HCT116 (cell line): ENCODE measurements at regions of chr17 and their contacts with region 1.

Region 1: DNA sequence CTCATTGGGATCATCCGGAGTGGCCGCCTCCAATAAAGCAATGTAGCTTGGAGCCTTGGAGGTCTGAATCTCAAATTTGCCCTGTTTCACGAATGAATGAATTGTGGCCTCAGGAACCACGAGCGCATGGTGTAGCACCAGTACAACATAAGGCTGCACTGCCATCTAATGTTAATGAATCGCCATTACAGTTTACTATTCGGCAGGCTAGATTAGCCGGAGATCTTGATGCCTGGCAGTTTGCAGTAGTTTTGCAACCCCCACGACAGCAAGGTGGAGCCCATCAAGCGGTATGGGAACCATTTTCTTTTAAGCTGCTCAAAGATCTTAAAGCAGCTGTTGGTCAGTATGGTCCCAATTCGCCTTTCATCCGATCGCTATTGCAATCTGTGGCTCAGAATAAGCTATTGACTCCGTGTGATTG is 18.8 kb downstream of the ALOX15B start:
- DNase-seq: peak; percentile 83
- ATAC-seq: peak; percentile 94
- H3K4me3 ChIP-seq: no peak overlapping the region
- H3K27ac ChIP-seq: no peak overlapping the region
- H3K4me1 ChIP-seq: peaks cover 0 to 20% of the 10 kb centered on the region in 2 experiments; a peak in 3 of 4 replicates
- H3K27me3 ChIP-seq: no peaks in the 10 kb centered on the region
- CTCF ChIP-seq: peak; percentile 65 to 89 (median 77)
- POLR2A ChIP-seq: no peak
- RAD21 ChIP-seq: peak; percentile 93

Region 2: DNA sequence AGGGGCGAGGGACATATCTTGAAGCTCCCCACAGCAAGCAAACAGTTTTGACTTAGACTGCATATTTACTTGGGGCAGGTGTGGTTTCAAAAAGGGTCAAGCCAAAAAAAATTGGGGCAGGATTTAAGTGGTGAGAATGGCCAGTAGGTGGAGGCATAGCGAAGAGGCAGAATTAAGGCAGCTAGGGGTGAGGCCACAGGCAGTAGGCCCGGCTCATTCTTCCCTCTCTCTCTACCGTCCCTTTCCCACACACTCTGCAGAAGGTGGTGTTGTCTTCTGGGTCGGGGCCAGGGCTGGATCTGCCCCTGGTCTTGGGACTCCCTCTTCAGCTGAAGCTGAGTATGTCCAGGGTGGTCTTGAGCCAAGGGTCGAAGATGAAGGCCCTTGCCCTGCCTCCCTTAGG is 425.2 kb before region 1 on chr17:
- CTCF ChIA-PET with region 1: no interaction called
- POLR2A ChIA-PET with region 1: no interaction called
- RAD21 ChIA-PET with region 1: no interaction called
- intact Hi-C with region 1: loop called (anchors 5 kb)
- DNase-seq: peak; percentile 54
- ATAC-seq: peak; percentile 74
- H3K4me3 ChIP-seq: no peak overlapping the region
- H3K27ac ChIP-seq: no peak overlapping the region
- H3K4me1 ChIP-seq: peaks cover 4 to 10% of the 10 kb centered on the region in 2 experiments; a peak in 3 of 4 replicates
- H3K27me3 ChIP-seq: no peaks in the 10 kb centered on the region
- CTCF ChIP-seq: peak; percentile 58 to 67 (median 60); a peak in 5 of 6 replicates
- POLR2A ChIP-seq: no peak
- RAD21 ChIP-seq: peak; percentile 69

Region 3: GRCh38 chr17:7912927-7913524 is 144.7 kb before region 1 on chr17:
- CTCF ChIA-PET with region 1: interaction called, 19 read pairs
- POLR2A ChIA-PET with region 1: no interaction called
- RAD21 ChIA-PET with region 1: interaction called, 3 read pairs
- intact Hi-C with region 1: loop called (anchors 1 kb)
- DNase-seq: peak; percentile 81
- ATAC-seq: peak; percentile 83
- H3K4me3 ChIP-seq: no peak overlapping the region
- H3K27ac ChIP-seq: no peak overlapping the region
- H3K4me1 ChIP-seq: peaks cover 10 to 28% of the 10 kb centered on the region in 2 experiments; a peak in 3 of 4 replicates
- H3K27me3 ChIP-seq: no peaks in the 10 kb centered on the region
- CTCF ChIP-seq: peak; percentile 80 to 91 (median 86)
- POLR2A ChIP-seq: no peak
- RAD21 ChIP-seq: peak; percentile 92

Region 4: GRCh38 chr17:8073627-8074484 is 16.2 kb after region 1 on chr17:
- CTCF ChIA-PET with region 1: interaction called, 29 read pairs
- POLR2A ChIA-PET with region 1: no interaction called
- RAD21 ChIA-PET with region 1: interaction called, 3 to 4 read pairs
- intact Hi-C with region 1: no loop called
- DNase-seq: peak; percentile 44
- ATAC-seq: peak; percentile 96
- H3K4me3 ChIP-seq: peak overlapping the region; percentile 1 to 41; a peak in 3 of 4 replicates
- H3K27ac ChIP-seq: no peak overlapping the region
- H3K4me1 ChIP-seq: peaks cover 0 to 16% of the 10 kb centered on the region in 2 experiments; a peak in 2 of 4 replicates
- H3K27me3 ChIP-seq: peaks cover 4% of the 10 kb centered on the region; the same call in 1 of the 2 replicates
- CTCF ChIP-seq: peak; percentile 70 to 97 (median 92)
- POLR2A ChIP-seq: no peak
- RAD21 ChIP-seq: peak; percentile 58

Region 5: GRCh38 chr17:8109661-8110464 is 52.2 kb after region 1 on chr17:
- CTCF ChIA-PET with region 1: interaction called, 5 read pairs
- POLR2A ChIA-PET with region 1: interaction called, 3 read pairs
- RAD21 ChIA-PET with region 1: no interaction called
- intact Hi-C with region 1: loop called (anchors 1 kb)
- DNase-seq: no peak
- ATAC-seq: peak; percentile 99
- H3K4me3 ChIP-seq: no peak overlapping the region
- H3K27ac ChIP-seq: no peak overlapping the region
- H3K4me1 ChIP-seq: peaks cover 0 to 9% of the 10 kb centered on the region in 2 experiments; a peak in 2 of 4 replicates
- H3K27me3 ChIP-seq: no peaks in the 10 kb centered on the region
- CTCF ChIP-seq: peak; percentile 82 to 89 (median 88)
- POLR2A ChIP-seq: no peak
- RAD21 ChIP-seq: peak; percentile 84

Region 6: GRCh38 chr17:8173056-8173870 is 115.6 kb after region 1 on chr17:
- CTCF ChIA-PET with region 1: no interaction called
- POLR2A ChIA-PET with region 1: interaction called, 15 read pairs
- RAD21 ChIA-PET with region 1: no interaction called
- intact Hi-C with region 1: no loop called
- DNase-seq: peak; percentile 99
- ATAC-seq: peak; percentile 78
- H3K4me3 ChIP-seq: peak overlapping the region; percentile 43 to 57
- H3K27ac ChIP-seq: peak overlapping the region; percentile 69
- H3K4me1 ChIP-seq: peaks cover 22 to 46% of the 10 kb centered on the region in 2 experiments
- H3K27me3 ChIP-seq: no peaks in the 10 kb centered on the region
- CTCF ChIP-seq: no peak
- POLR2A ChIP-seq: peak; percentile 100
- RAD21 ChIP-seq: no peak; the same call in 1 of the 2 replicates

Region 7: GRCh38 chr17:8745586-8746500 is 688.1 kb after region 1 on chr17:
- CTCF ChIA-PET with region 1: interaction called, 12 read pairs
- POLR2A ChIA-PET with region 1: no interaction called
- RAD21 ChIA-PET with region 1: no interaction called
- intact Hi-C with region 1: loop called (anchors 5 kb)
- DNase-seq: peak; percentile 16
- ATAC-seq: peak; percentile 97
- H3K4me3 ChIP-seq: peak overlapping the region; percentile 52 to 58
- H3K27ac ChIP-seq: no peak overlapping the region
- H3K4me1 ChIP-seq: peaks cover 0 to 12% of the 10 kb centered on the region in 2 experiments; a peak in 2 of 4 replicates
- H3K27me3 ChIP-seq: no peaks in the 10 kb centered on the region
- CTCF ChIP-seq: peak; percentile 47 to 78 (median 76); a peak in 5 of 6 replicates
- POLR2A ChIP-seq: no peak
- RAD21 ChIP-seq: peak; percentile 89